ENCODE measurements at regions of chr9 and their contacts with region 1.

Region 1: GRCh38 chr9:72383978-72384709 is 19.1 kb upstream of the ZFAND5 start:
- DNase-seq: peak; percentile 66
- H3K4me3 ChIP-seq: no peak overlapping the region
- H3K27ac ChIP-seq: peak overlapping the region; percentile 63
- H3K27me3 ChIP-seq: no peaks in the 10 kb centered on the region
- CTCF ChIP-seq: no peak

Region 2: GRCh38 chr9:72371151-72371550 is 13.0 kb before region 1 on chr9:
- CTCF ChIA-PET with region 1: no interaction called
- POLR2A ChIA-PET with region 1: interaction called, 32 read pairs
- DNase-seq: no peak
- H3K4me3 ChIP-seq: no peak overlapping the region
- H3K27ac ChIP-seq: no peak overlapping the region
- H3K27me3 ChIP-seq: no peaks in the 10 kb centered on the region
- CTCF ChIP-seq: no peak

Measured in AG04450 (cell line).